Calu3 (cell line): ENCODE measurements at regions of chr7 and their contacts with region 1.

Region 1: DNA sequence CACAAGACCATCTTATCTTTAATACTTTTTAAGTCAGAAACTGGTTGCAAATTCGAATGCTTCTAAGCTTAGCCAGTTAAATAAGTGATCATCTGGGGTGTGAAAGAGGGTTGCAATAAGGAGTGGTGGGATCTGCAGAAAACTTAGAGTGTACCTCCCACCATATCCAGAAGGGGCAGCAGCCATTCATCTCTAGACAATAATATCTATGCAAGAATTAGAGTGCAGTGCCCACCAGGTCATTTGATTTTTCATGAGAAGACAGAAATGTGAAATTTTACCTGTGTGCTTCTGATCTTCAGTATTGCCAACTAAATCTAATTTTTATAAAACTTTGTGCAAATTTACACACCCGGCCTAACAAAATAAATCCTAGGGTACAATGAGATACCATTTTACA is 127.2 kb upstream of the SP4 start:
- DNase-seq: peak; percentile 23
- H3K4me3 Mint-ChIP-seq: no peak overlapping the region
- H3K27ac Mint-ChIP-seq: no peak overlapping the region
- H3K4me1 Mint-ChIP-seq: peaks cover 15% of the 10 kb centered on the region
- H3K27me3 Mint-ChIP-seq: no peaks in the 10 kb centered on the region
- CTCF ChIP-seq: peak; percentile 51

Region 2: GRCh38 chr7:21146642-21147433 is 153.9 kb before region 1 on chr7:
- CTCF ChIA-PET with region 1: no interaction called
- intact Hi-C with region 1: no loop called
- DNase-seq: no peak
- H3K4me3 Mint-ChIP-seq: no peak overlapping the region
- H3K27ac Mint-ChIP-seq: no peak overlapping the region
- H3K4me1 Mint-ChIP-seq: no peaks in the 10 kb centered on the region
- H3K27me3 Mint-ChIP-seq: peaks cover 93% of the 10 kb centered on the region
- CTCF ChIP-seq: no peak

Region 3: GRCh38 chr7:21365866-21366624 is 65.4 kb after region 1 on chr7:
- CTCF ChIA-PET with region 1: interaction called, 4 read pairs
- intact Hi-C with region 1: loop called (anchors 1 kb)
- DNase-seq: peak; percentile 69
- H3K4me3 Mint-ChIP-seq: peak overlapping the region; percentile 6
- H3K27ac Mint-ChIP-seq: peak overlapping the region; percentile 0
- H3K4me1 Mint-ChIP-seq: peaks cover 60% of the 10 kb centered on the region
- H3K27me3 Mint-ChIP-seq: no peaks in the 10 kb centered on the region
- CTCF ChIP-seq: no peak

Region 4: GRCh38 chr7:21507626-21508343 is 207.1 kb after region 1 on chr7:
- CTCF ChIA-PET with region 1: no interaction called
- intact Hi-C with region 1: loop called (anchors 5 kb)
- DNase-seq: peak; percentile 80
- H3K4me3 Mint-ChIP-seq: no peak overlapping the region
- H3K27ac Mint-ChIP-seq: no peak overlapping the region
- H3K4me1 Mint-ChIP-seq: peaks cover 20% of the 10 kb centered on the region
- H3K27me3 Mint-ChIP-seq: no peaks in the 10 kb centered on the region
- CTCF ChIP-seq: peak; percentile 87

Region 5: GRCh38 chr7:21568762-21569161 is 268.1 kb after region 1 on chr7:
- CTCF ChIA-PET with region 1: no interaction called
- intact Hi-C with region 1: loop called (anchors 5 kb)
- DNase-seq: peak; percentile 24
- H3K4me3 Mint-ChIP-seq: no peak overlapping the region
- H3K27ac Mint-ChIP-seq: no peak overlapping the region
- H3K4me1 Mint-ChIP-seq: peaks cover 11% of the 10 kb centered on the region
- H3K27me3 Mint-ChIP-seq: no peaks in the 10 kb centered on the region
- CTCF ChIP-seq: no peak